Sigmoid colon (tissue), 7 donors: ENCODE measurements at regions of chr3 and their contacts with region 1.

Region 1: GRCh38 chr3:151918253-151919029 is 45.0 kb downstream of the SUCNR1 start:
- DNase-seq: no peak
- H3K4me3 ChIP-seq: no peak overlapping the region
- H3K27ac ChIP-seq: no peak overlapping the region
- H3K4me1 ChIP-seq: peaks cover 0 to 10% (median 2%) of the 10 kb centered on the region in 4 donors
- H3K27me3 ChIP-seq: no peaks in the 10 kb centered on the region
- CTCF ChIP-seq: peak in 3 of 4 experiments; percentile 35 to 62 (median 53)
- EP300 ChIP-seq: no peak
- POLR2A ChIP-seq: no peak

Region 2: DNA sequence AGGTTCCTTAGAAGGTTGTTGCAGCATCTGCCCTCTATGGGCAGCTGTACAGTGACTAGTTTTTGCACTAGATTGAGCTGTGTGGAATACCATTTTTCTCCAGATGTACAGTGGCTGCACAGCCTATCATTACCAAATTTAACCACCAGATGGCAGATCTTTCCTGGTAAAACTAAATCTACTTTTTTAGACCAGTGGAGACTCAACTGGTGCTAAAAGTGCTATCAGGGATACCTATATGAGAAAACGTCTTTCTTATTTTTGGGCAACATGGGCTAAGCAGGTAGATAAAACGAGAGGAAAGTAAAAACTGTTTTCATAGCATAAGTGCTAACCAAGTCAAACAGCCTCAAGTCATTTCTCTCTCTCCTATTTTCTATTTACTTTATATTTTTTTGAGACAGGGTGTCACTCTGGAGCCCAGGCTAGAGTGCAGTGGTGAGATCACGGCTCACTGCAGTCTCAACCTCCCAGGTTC is 478.8 kb before region 1 on chr3:
- intact Hi-C with region 1: loop called (anchors 5 kb)
- DNase-seq: no peak
- H3K4me3 ChIP-seq: no peak overlapping the region
- H3K27ac ChIP-seq: no peak overlapping the region
- H3K4me1 ChIP-seq: no peaks in the 10 kb centered on the region
- H3K27me3 ChIP-seq: no peaks in the 10 kb centered on the region
- CTCF ChIP-seq: peak; percentile 75 to 81 (median 80)
- EP300 ChIP-seq: no peak
- POLR2A ChIP-seq: no peak

Region 3: DNA sequence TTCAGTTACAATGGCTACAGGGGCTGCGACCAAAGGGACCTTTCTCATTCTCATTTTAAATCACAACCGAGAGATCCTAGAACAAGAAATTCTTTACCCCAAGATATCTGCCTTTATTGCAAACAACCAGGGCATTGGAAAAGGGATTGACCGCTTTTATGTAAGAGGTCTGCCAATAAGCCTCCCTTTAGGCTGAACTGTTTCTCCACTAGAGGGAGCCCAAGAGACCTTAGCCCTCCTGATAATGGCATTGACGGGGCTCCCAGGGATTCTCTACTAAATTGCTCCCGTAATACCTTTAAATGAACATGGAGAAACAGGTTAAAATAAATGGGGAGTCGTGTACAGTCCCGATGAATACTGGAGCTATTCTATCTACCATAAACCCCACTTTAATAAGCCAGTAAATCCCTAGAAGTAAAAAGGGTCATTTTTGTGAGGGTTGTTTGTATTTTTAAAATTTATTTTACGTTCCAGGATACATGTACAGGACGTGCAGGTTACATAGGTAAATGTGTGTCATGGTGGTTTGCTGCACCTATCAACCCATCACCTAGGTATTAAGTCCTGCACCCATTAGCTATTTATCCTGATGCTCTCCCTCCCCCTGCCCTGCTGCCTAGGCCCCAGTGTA is 450.0 kb before region 1 on chr3:
- intact Hi-C with region 1: loop called (anchors 2 kb)
- DNase-seq: no peak
- H3K4me3 ChIP-seq: no peak overlapping the region
- H3K27ac ChIP-seq: no peak overlapping the region
- H3K4me1 ChIP-seq: no peaks in the 10 kb centered on the region
- H3K27me3 ChIP-seq: no peaks in the 10 kb centered on the region
- CTCF ChIP-seq: peak; percentile 36 to 82 (median 62)
- EP300 ChIP-seq: no peak
- POLR2A ChIP-seq: no peak

Region 4: DNA sequence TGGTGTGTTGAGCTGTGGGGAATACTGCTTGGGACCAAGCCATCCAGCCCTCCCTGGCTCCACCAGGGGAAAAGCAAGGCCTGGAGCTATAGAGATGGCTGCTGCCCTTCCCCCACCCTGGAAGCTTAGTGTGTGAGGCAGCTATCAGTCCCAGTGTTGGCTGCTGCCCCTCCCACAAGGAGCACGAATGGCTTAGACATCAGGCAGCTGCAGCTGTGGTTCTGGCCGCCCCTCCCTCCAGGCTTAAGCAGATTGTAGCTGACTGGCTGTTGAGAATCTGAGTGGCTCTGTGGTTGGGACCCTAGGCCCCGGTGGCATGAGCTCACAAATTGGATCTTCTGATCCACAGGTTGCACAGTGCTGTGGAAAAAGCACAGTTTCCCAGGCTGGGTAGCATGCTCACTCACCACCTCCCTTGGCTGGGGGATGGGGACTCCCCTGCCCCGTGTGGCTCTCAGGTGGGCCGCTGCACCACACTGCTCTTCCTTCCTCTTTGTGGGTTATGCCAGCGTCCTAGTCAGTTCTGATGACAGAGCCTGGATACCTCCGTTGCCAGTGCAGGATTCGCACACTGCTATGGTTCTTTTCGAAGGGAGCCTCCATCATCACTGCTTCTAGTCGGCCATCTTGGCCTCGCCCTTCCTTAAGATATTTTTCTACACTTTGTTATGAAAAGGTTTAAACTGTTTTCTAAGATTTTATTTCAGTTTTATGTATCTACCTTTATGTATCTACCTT is 66.2 kb before region 1 on chr3:
- intact Hi-C with region 1: no loop called
- DNase-seq: no peak
- H3K4me3 ChIP-seq: no peak overlapping the region
- H3K27ac ChIP-seq: no peak overlapping the region
- H3K4me1 ChIP-seq: no peaks in the 10 kb centered on the region
- H3K27me3 ChIP-seq: no peaks in the 10 kb centered on the region
- CTCF ChIP-seq: no peak
- EP300 ChIP-seq: no peak
- POLR2A ChIP-seq: no peak